Right lobe of liver (tissue), 6 donors: ENCODE measurements at regions of chr20 and their contacts with region 1.

Region 1: DNA sequence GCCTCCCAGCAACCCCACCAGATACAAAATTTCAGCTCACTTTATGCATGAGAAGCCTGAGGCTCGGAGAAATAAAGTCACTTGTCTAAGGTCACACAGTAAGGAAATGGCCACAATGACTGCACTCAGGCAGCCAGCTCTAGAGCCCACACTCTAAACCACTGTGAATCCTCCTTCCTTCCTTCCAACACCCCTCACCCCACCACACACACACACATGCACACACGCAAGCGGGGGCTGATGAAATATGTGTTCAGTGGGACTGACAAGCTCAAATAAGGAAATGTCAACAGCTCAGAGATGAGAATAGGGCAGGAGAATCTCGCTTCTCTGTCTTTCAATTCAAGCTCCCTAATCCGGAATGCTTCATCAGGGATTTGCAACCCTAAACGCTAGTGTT is 6.0 kb upstream of the BPIFA1 start:
- DNase-seq: no peak
- ATAC-seq: no peak
- H3K4me3 ChIP-seq: no peak overlapping the region
- H3K27ac ChIP-seq: no peak overlapping the region
- H3K4me1 ChIP-seq: no peaks in the 10 kb centered on the region
- H3K27me3 ChIP-seq: no peaks in the 10 kb centered on the region
- CTCF ChIP-seq: no peak
- POLR2A ChIP-seq: no peak

Region 2: GRCh38 chr20:32918296-32918695 is 311.5 kb before region 1 on chr20:
- intact Hi-C with region 1: loop called in 1 of 2 experiments (anchors 10 kb)
- DNase-seq: no peak
- ATAC-seq: no peak
- H3K4me3 ChIP-seq: no peak overlapping the region
- H3K27ac ChIP-seq: no peak overlapping the region
- H3K4me1 ChIP-seq: no peaks in the 10 kb centered on the region
- H3K27me3 ChIP-seq: no peaks in the 10 kb centered on the region
- CTCF ChIP-seq: no peak
- POLR2A ChIP-seq: no peak